Gastrocnemius medialis (tissue), 4 donors: ENCODE measurements at regions of chr18 and their contacts with region 1.

Region 1: GRCh38 chr18:49359732-49360444 is 100.6 kb downstream of the DYM start:
- DNase-seq: no peak
- ATAC-seq: no peak
- H3K4me3 ChIP-seq: no peak overlapping the region
- H3K27ac ChIP-seq: no peak overlapping the region
- H3K4me1 ChIP-seq: no peaks in the 10 kb centered on the region
- H3K27me3 ChIP-seq: no peaks in the 10 kb centered on the region
- CTCF ChIP-seq: no peak
- POLR2A ChIP-seq: no peak

Region 2: DNA sequence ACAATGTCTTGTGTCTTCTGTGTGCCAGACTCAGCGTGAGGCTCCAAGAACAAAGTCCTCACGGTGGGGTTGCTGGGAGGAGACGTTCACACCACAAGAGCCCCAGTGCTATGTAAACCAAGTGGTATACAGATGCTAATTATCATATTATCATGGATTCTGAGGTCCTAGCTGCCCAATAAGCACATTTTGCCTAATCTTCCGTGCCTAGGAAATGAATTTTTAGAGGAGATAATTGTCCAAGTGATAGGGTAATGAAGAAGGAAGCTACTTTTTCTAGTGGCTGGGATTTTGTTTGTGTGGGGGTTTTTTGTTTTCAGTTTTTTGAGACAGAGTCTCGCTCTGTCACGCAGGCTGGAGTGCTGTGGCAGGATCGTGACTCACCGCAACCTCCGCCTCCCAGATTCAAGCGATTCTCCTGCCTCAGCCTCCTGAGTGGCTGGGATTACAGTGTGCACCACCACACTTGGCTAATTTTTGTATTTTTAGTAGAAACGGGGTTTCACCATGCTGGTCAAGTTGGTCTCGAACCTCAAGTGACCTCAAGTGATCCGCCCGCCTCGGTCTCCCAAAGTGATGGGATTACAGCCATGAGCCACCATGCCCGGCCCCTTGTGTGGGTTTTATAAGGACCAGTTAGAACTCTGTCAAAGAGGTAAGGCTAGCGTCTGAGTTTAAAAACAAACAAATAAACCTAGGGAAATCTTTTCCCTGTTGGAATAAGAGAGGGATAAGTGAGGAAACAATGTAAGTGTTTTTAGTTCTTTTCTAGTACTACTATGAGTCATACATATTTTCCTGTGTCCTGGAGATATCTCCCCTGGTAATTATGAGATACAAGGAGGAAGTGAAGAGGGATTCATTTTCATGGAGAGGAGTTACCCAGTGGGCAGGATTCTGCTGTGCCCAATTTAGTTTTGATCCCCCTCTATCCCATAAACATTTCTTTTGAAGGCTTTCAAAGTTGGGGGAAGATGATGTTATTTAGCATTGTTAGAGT is 399.7 kb before region 1 on chr18:
- in situ Hi-C with region 1: no loop called
- intact Hi-C with region 1: no loop called
- DNase-seq: no peak
- ATAC-seq: no peak
- H3K4me3 ChIP-seq: no peak overlapping the region
- H3K27ac ChIP-seq: peak overlapping the region in 1 of 4 donors; percentile 50
- H3K4me1 ChIP-seq: peaks cover 17 to 18% of the 10 kb centered on the region in 2 donors
- H3K27me3 ChIP-seq: no peaks in the 10 kb centered on the region
- CTCF ChIP-seq: no peak
- POLR2A ChIP-seq: no peak

Region 3: DNA sequence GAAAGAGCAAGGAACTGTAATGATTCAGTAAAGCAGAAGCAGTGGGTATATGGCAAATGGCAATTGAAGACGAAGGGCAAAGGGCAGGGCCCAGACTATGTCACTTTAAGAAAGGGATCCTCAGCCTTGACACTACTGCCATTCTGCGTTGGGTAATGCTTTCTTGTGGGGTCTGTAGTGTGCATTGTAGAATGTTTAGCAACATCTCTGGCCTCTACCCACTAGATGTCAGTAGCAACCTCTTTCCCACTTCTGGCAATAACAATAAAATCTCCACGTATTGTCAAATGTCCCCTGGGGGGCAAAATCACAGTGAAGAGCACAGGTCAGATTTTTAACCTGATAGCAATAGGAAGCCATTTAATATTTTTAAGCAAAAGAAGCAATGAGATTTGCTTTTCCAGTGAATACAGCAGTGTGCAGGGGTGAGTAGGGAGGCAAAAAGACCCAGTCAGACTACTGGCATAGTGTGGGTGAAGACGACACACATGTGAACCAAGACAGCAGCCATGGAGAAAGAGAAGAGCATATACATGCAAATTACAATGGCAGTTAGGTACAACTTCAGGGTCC is 109.0 kb before region 1 on chr18:
- in situ Hi-C with region 1: loop called in 1 of 4 experiments (anchors 25 kb)
- intact Hi-C with region 1: no loop called
- DNase-seq: no peak
- ATAC-seq: no peak
- H3K4me3 ChIP-seq: no peak overlapping the region
- H3K27ac ChIP-seq: no peak overlapping the region
- H3K4me1 ChIP-seq: no peaks in the 10 kb centered on the region
- H3K27me3 ChIP-seq: no peaks in the 10 kb centered on the region
- CTCF ChIP-seq: peak in 1 of 5 experiments; percentile 9
- POLR2A ChIP-seq: no peak